ENCODE measurements at regions of chr19 and their contacts with region 1.

Region 1: DNA sequence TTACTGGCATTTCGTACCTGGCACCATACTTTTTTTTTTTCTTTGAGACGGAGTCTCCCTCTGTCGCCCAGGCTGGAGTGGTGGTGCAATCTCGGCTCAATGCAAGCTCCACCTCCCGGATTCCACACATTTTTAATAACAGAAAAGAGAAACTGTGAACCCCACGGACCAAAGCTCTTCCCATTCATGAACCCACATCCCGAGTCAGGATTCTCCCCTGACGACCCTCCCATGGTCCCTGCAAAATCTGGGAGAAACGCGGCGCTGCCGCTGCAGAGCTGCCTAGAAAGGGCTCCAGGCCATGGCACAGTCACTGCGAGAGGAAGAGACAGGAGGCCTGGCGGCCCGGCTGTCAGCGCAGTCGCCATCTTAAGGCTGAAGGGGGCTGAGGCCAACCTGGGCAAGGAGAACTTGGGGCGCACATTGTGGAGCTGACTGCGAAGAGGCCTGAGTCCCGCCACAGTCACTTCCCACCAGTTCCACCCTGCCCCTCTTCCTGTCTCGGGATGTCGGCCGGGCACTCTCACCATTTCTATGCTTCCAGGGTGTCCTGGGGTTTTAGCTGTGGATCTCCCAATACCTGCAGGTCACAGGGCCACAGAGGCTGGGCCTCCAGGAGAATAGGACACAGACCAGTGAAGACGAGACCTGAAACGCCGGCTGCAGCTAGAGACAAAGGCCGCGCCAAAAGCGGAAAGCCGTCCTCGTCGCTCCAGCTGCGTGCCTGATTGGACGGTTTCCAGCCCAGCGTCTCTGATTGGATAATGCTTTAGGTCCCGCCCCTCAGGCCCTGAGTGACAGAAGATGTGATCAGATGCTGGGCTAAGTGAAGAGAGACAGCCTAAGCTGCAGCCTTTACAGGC is 71.0 kb downstream of the ZNF486 start:
- DNase-seq: peak; percentile 75 to 94 (median 85)
- ATAC-seq: peak; percentile 95 to 97 (median 96)
- H3K4me3 ChIP-seq: peak overlapping the region; percentile 74 to 88
- H3K4me3 Mint-ChIP-seq: peak overlapping the region; percentile 94 to 99 (median 97)
- H3K27ac ChIP-seq: peak overlapping the region; percentile 31
- H3K27ac Mint-ChIP-seq: peak overlapping the region; percentile 63 to 84
- H3K4me1 ChIP-seq: peaks cover 0 to 12% of the 10 kb centered on the region in 2 experiments
- H3K4me1 Mint-ChIP-seq: peaks cover 10 to 12% (median 12%) of the 10 kb centered on the region in 3 donors
- H3K27me3 ChIP-seq: no peaks in the 10 kb centered on the region
- H3K27me3 Mint-ChIP-seq: no peaks in the 10 kb centered on the region

Region 2: GRCh38 chr19:19877724-19878123 is 360.3 kb before region 1 on chr19:
- CTCF ChIA-PET with region 1: no interaction called
- POLR2A ChIA-PET with region 1: no interaction called
- DNase-seq: no peak
- ATAC-seq: no peak
- H3K4me3 ChIP-seq: no peak overlapping the region
- H3K4me3 Mint-ChIP-seq: no peak overlapping the region
- H3K27ac ChIP-seq: no peak overlapping the region
- H3K27ac Mint-ChIP-seq: no peak overlapping the region
- H3K4me1 ChIP-seq: no peaks in the 10 kb centered on the region
- H3K4me1 Mint-ChIP-seq: peaks cover 13 to 22% (median 16%) of the 10 kb centered on the region in 3 donors
- H3K27me3 ChIP-seq: no peaks in the 10 kb centered on the region
- H3K27me3 Mint-ChIP-seq: no peaks in the 10 kb centered on the region

Region 3: DNA sequence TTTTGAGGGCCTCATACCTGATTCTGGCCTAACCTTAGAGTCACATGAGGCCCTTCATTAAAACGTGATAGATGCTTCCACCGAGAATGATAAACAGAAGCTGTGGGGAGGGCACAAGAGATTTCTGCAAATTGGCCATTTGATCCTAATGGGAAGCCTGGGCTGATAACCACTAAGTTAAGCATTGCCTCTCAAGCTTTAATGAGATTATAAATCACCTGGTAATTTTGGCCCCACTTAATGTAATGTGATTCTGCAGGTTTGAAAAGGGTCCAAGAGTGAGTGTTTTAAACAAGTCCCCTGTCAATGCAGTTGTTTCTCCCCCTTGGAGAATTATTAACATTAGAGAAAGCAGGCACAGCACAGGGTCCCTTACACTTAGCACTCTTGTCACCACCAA is 28.9 kb before region 1 on chr19:
- CTCF ChIA-PET with region 1: interaction called in 1 of 2 experiments, 13 read pairs
- POLR2A ChIA-PET with region 1: no interaction called
- DNase-seq: no peak
- ATAC-seq: no peak
- H3K4me3 ChIP-seq: no peak overlapping the region
- H3K4me3 Mint-ChIP-seq: no peak overlapping the region
- H3K27ac ChIP-seq: no peak overlapping the region
- H3K27ac Mint-ChIP-seq: no peak overlapping the region
- H3K4me1 ChIP-seq: no peaks in the 10 kb centered on the region
- H3K4me1 Mint-ChIP-seq: no peaks in the 10 kb centered on the region
- H3K27me3 ChIP-seq: no peaks in the 10 kb centered on the region
- H3K27me3 Mint-ChIP-seq: no peaks in the 10 kb centered on the region

Region 4: DNA sequence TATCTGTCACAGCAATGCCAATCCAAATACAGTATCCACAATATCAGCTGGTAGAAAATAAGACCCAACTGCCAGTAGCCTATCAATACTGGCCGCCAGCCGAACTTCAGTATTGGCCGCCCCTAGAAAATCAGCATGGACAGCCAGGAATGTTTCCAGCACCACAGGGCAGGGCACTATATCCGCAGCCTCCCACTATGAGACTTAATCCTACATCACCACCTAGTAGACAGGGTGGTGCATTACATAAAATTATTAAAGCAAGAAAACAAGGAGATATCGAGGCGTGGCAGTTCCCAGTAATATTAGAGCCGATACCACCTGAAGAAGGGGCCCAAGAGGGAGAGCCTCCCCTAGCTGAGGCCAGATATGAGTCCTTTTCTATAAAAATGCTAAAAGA is 40.4 kb after region 1 on chr19:
- CTCF ChIA-PET with region 1: interaction called in 1 of 2 experiments, 14 read pairs
- POLR2A ChIA-PET with region 1: no interaction called
- DNase-seq: peak in 6 of 35 experiments; percentile 1 to 58 (median 14)
- ATAC-seq: no peak
- H3K4me3 ChIP-seq: no peak overlapping the region
- H3K4me3 Mint-ChIP-seq: no peak overlapping the region
- H3K27ac ChIP-seq: no peak overlapping the region
- H3K27ac Mint-ChIP-seq: no peak overlapping the region
- H3K4me1 ChIP-seq: no peaks in the 10 kb centered on the region
- H3K4me1 Mint-ChIP-seq: no peaks in the 10 kb centered on the region
- H3K27me3 ChIP-seq: no peaks in the 10 kb centered on the region
- H3K27me3 Mint-ChIP-seq: peaks cover 0 to 1% of the 10 kb centered on the region in 2 donors